AG04450 (cell line): ENCODE measurements at regions of chr13 and their contacts with region 1.

Region 1: DNA sequence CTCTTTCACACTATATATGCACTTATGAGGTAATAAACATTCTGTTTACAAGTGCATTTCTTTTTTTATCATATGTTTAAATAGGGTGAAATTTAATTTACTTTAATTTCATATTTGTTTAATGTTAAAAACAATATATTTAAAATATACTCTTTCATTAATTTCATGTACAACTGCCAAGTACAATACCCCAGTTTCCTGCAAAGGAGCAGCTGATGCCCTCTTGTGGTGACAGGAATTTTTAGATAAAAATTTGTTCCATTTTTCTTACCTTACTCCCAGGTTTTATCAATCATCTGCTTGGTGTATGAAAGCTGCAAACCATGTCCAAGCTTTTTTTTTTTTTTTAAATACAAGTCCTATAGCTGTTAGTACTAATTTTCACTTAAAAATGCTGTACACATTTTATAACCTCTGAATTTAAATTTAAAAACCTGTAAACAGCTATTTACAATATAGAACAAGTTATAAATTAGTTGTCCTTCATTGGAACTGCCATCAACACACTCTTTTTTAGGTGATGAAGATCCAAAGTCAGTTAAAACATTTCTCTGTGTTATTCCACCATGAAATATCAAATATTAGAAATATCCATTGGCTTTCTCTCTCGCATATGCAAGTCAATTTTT is 4.9 kb downstream of the PCDH20 start:
- DNase-seq: no peak
- H3K4me3 ChIP-seq: no peak overlapping the region
- H3K27ac ChIP-seq: no peak overlapping the region
- H3K27me3 ChIP-seq: peaks cover 6% of the 10 kb centered on the region
- CTCF ChIP-seq: peak; percentile 61

Region 2: DNA sequence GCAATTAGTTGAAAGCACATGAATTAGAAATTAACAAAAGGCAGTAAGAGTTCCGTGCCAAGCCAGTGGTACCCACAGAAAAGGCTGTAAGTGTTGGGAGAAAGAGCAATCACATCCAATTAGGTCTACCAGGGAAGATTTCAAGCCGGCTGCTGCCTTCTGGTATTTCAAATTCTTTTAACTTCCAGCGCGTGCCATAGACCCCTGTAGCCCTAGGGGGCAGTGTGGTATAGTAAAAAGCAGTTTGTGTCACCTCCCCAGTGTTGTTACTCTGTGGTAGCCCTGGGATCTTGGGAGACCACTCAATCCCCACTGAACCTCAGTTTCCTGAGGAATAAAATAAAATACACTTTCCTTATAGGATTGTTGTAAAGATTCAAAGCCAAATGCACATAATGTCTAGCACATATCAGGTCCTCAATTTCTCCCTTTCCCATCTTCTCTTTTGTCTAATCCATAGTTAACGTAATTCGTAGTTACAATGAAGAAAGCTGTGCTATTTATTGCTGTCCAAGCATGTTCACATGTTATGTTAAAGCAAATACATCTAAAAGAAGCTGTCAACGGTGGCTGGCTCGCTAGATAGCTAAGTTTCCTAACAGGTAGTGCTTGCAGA is 783.6 kb before region 1 on chr13:
- CTCF ChIA-PET with region 1: interaction called, 16 read pairs
- POLR2A ChIA-PET with region 1: no interaction called
- DNase-seq: no peak
- H3K4me3 ChIP-seq: no peak overlapping the region
- H3K27ac ChIP-seq: no peak overlapping the region
- H3K27me3 ChIP-seq: no peaks in the 10 kb centered on the region
- CTCF ChIP-seq: peak; percentile 60

Region 3: DNA sequence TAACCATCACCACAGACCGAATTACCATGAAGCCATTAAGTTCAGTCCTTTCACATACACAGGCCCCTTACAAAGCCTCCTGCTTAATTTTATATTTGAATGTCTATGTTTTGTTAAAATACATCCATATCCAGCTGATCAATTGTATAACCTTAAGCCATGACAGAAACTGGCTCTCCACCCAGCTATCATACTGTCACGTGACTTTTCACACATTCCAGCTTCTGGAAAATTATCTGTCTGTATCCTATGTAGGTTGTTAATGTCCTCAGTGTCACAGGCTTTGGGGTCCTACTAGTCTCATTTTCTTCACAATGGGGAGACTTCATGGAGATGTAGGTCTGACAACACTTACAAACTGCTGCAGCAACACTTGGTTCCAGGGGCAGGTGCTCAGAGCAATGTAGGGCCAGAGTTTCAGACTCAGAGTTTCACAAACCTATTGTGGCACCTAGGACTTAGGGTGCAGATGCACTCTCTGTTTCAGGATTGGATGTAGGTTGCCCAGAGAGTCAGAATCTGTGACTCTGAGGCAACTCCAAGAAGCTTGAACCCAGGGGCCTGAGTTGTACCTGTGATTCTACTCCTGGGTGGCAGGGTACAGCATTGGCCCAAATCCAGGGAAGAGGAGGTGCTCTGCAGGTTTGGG is 74.5 kb after region 1 on chr13:
- CTCF ChIA-PET with region 1: no interaction called
- POLR2A ChIA-PET with region 1: no interaction called
- DNase-seq: no peak
- H3K4me3 ChIP-seq: no peak overlapping the region
- H3K27ac ChIP-seq: no peak overlapping the region
- H3K27me3 ChIP-seq: no peaks in the 10 kb centered on the region
- CTCF ChIP-seq: no peak